Naive thymus-derived CD8-positive, alpha-beta T cell (primary cell): ENCODE measurements at regions of chr2 and their contacts with region 1.

Region 1: GRCh38 chr2:196182439-196183171 is 11.2 kb upstream of the STK17B start:
- DNase-seq: peak in 3 of 10 donors; percentile 30 to 39 (median 36)
- ATAC-seq: peak; percentile 19 to 26
- H3K4me3 Mint-ChIP-seq: peak overlapping the region; percentile 45 to 74 (median 62)
- H3K27ac Mint-ChIP-seq: peak overlapping the region; percentile 92 to 98 (median 95)
- H3K4me1 Mint-ChIP-seq: peaks cover 36 to 91% (median 83%) of the 10 kb centered on the region in 4 donors
- H3K27me3 Mint-ChIP-seq: no peaks in the 10 kb centered on the region

Region 2: DNA sequence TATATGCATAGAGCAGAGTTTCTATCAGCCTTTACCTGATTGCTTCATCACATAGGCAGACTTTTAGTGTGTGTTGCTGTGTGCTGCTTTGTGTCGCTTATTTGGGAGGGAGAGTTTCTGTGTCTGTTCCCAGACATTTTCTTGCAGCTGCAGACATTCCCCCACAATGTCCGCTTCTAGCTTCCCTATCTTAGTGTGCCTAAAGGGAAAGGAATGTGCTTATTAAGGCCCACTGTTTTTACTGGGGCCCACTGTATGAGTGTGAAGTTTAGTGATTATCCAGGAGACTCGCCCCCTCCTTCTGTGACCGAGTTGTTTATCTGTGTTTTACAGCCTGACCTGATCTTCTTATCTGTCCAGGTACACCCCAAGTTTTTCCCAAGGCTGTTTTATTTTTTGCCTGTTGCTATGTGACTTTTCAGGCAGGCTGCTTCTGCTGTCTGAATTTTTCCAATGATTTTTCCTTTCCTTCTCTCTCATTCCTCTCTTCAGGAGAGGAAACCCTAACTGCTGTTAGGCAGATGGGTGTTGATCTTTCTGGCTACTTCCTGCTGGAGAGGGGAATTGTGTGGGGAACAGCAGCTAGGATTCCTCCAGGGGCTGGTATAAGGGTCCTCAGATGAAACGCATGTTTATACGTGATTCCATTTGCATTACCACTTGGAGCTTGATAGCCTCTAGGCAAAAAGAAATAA is 58.8 kb before region 1 on chr2:
- POLR2A ChIA-PET with region 1: no interaction called
- DNase-seq: no peak
- ATAC-seq: no peak
- H3K4me3 Mint-ChIP-seq: no peak overlapping the region
- H3K27ac Mint-ChIP-seq: no peak overlapping the region
- H3K4me1 Mint-ChIP-seq: peaks cover 0 to 2% (median 0%) of the 10 kb centered on the region in 4 donors
- H3K27me3 Mint-ChIP-seq: no peaks in the 10 kb centered on the region

Region 3: DNA sequence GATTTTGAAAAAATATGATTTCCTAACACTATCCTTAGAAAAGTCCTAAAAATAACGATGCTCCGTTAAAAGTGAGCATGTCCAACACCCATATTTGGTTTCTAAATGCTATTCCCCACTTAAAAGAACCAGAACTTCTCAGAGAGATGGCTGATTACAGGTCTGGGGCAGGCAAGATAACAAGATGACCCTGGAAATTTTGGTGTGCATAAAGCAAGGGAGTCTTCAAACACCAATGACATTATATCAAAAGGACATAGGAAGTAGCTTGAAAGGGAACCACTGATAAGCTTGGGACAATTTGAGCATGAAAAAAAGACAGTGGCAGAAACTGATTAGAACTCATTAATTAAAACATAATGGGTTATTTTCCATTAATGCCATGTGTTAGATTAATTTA is 29.1 kb before region 1 on chr2:
- POLR2A ChIA-PET with region 1: no interaction called
- DNase-seq: no peak
- ATAC-seq: no peak
- H3K4me3 Mint-ChIP-seq: peak overlapping the region in 9 of 10 donors; percentile 55 to 84 (median 70)
- H3K27ac Mint-ChIP-seq: peak overlapping the region; percentile 85 to 97 (median 92)
- H3K4me1 Mint-ChIP-seq: peaks cover 27 to 96% (median 84%) of the 10 kb centered on the region in 4 donors
- H3K27me3 Mint-ChIP-seq: no peaks in the 10 kb centered on the region

Region 4: GRCh38 chr2:196200557-196200956 is 18.0 kb after region 1 on chr2:
- POLR2A ChIA-PET with region 1: interaction called, 23 read pairs
- DNase-seq: peak in 1 of 10 donors; percentile 39
- ATAC-seq: peak; percentile 82 to 87
- H3K4me3 Mint-ChIP-seq: peak overlapping the region; percentile 25 to 76 (median 64)
- H3K27ac Mint-ChIP-seq: peak overlapping the region in 8 of 10 donors; percentile 73 to 90 (median 86)
- H3K4me1 Mint-ChIP-seq: peaks cover 21 to 44% (median 41%) of the 10 kb centered on the region in 4 donors
- H3K27me3 Mint-ChIP-seq: no peaks in the 10 kb centered on the region

Region 5: DNA sequence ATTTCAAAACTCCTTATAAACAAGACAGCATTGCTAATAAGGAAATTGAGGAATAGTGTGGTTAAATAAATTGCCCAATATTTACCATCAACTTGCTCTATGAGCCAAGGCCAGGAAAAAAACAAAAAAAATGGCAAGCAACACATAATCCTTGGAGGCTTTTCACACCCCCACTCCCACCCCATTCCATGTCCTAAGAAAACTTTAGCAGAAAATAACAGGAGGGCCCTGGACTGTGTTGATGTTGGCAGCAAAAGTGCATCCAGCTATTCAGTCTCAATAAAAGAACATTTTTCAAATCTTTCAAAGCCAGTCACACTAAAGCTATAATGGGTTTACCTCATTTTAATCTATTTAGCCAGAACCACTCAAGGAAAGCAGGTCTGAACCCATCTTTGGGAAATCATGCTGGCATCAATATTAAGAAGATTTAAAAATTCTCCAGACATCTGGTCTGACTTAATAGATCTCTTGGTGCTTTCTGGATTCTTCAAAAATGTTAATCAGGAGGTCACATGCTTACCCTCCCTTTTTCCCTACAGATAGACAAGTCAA is 23.4 kb after region 1 on chr2:
- POLR2A ChIA-PET with region 1: interaction called, 193 read pairs
- DNase-seq: no peak
- ATAC-seq: no peak
- H3K4me3 Mint-ChIP-seq: no peak overlapping the region
- H3K27ac Mint-ChIP-seq: peak overlapping the region in 5 of 10 donors; percentile 26 to 64 (median 33)
- H3K4me1 Mint-ChIP-seq: peaks cover 23 to 62% (median 51%) of the 10 kb centered on the region in 4 donors
- H3K27me3 Mint-ChIP-seq: no peaks in the 10 kb centered on the region